MCF 10A (cell line): ENCODE measurements at regions of chr11 and their contacts with region 1.

Region 1: DNA sequence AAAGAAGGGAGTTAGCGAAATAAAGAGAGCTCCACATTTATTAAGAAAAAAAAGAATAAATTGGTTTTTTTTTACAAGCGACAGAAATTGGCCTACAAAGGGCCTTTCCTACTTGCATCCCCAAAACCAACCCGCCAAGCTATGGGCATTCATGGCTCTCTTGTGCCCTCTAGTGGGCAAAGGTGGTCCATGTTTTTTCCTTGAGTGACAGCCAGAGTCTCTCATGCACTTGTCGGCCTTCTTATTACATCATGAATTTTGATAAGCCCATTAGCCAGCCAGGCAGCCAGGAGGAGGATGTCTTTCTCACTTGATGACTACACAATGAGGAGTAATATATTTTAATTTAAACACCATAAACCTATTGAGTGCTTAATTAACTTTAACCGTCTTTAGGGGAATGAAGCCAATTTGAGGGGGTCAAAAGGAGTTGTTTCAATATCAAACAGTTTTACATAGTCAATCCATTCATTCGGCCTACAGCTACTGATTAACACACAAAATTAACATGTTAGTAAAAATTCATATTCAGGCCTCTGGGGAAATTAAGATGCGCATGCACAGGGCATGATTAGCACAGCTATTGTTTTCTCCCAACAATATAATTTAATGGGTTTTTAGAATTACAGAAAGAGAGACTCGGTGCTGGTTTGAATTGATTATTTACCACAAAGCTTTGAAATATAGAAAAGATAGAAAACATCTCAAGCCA is 85.5 kb downstream of the RCN1 start:
- DNase-seq: peak; percentile 89
- H3K4me3 Mint-ChIP-seq: no peak overlapping the region
- H3K27ac Mint-ChIP-seq: no peak overlapping the region
- H3K4me1 Mint-ChIP-seq: no peaks in the 10 kb centered on the region
- H3K27me3 Mint-ChIP-seq: peaks cover 21% of the 10 kb centered on the region
- CTCF ChIP-seq: peak; percentile 86

Region 2: DNA sequence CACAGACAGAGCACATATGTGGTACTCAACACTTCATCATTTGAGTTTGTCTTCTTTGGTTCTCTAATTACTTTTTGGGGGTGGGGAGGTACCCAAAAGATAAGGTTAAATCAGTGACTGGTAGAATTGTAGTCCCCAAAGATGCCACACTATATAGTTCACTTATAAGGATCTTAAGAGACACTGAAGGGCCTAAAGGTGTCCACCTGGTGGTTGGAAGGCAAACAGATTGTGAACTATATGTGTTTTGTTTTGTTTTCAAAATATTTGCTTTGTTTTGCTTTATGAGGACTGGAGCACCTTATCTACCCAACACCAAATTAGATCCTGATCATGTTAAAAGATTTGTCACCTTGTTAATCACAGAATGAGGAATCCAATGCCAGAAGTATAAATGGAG is 943.0 kb before region 1 on chr11:
- CTCF ChIA-PET with region 1: interaction called, 22 read pairs
- POLR2A ChIA-PET with region 1: no interaction called
- intact Hi-C with region 1: loop called (anchors 1 kb)
- DNase-seq: peak; percentile 19
- H3K4me3 Mint-ChIP-seq: no peak overlapping the region
- H3K27ac Mint-ChIP-seq: no peak overlapping the region
- H3K4me1 Mint-ChIP-seq: peaks cover 4% of the 10 kb centered on the region
- H3K27me3 Mint-ChIP-seq: no peaks in the 10 kb centered on the region
- CTCF ChIP-seq: peak; percentile 43

Region 3: GRCh38 chr11:31487848-31488247 is 688.5 kb before region 1 on chr11:
- CTCF ChIA-PET with region 1: interaction called, 13 read pairs
- POLR2A ChIA-PET with region 1: no interaction called
- intact Hi-C with region 1: loop called (anchors 10 kb)
- DNase-seq: peak; percentile 52
- H3K4me3 Mint-ChIP-seq: no peak overlapping the region
- H3K27ac Mint-ChIP-seq: no peak overlapping the region
- H3K4me1 Mint-ChIP-seq: peaks cover 11% of the 10 kb centered on the region
- H3K27me3 Mint-ChIP-seq: no peaks in the 10 kb centered on the region
- CTCF ChIP-seq: peak; percentile 43

Region 4: DNA sequence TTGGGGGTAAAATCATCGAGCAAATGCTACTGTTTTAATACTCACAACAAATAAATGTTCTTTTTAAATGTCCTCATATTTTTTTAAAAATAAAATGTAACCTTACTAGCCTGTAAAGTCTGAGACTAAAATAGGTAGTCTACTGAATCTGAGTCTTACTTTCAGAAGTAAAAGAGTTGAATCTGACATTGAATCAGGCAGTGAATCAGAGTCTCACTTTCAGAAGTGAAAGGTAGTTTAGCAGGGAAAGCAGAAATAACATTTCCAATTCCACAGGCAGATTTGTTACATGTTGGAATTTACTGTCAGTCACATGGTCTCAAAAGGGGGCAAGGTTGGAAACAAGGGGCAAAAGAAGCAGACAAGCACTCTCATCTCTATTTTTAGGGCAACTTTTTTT is 523.9 kb before region 1 on chr11:
- CTCF ChIA-PET with region 1: no interaction called
- POLR2A ChIA-PET with region 1: no interaction called
- intact Hi-C with region 1: no loop called
- DNase-seq: no peak
- H3K4me3 Mint-ChIP-seq: no peak overlapping the region
- H3K27ac Mint-ChIP-seq: no peak overlapping the region
- H3K4me1 Mint-ChIP-seq: peaks cover 15% of the 10 kb centered on the region
- H3K27me3 Mint-ChIP-seq: no peaks in the 10 kb centered on the region
- CTCF ChIP-seq: no peak

Region 5: GRCh38 chr11:32044158-32044863 is 132.1 kb before region 1 on chr11:
- CTCF ChIA-PET with region 1: interaction called, 241 read pairs
- POLR2A ChIA-PET with region 1: interaction called, 4 read pairs
- intact Hi-C with region 1: no loop called
- DNase-seq: no peak
- H3K4me3 Mint-ChIP-seq: no peak overlapping the region
- H3K27ac Mint-ChIP-seq: no peak overlapping the region
- H3K4me1 Mint-ChIP-seq: no peaks in the 10 kb centered on the region
- H3K27me3 Mint-ChIP-seq: peaks cover 60% of the 10 kb centered on the region
- CTCF ChIP-seq: no peak

Region 6: GRCh38 chr11:32071811-32072210 is 104.6 kb before region 1 on chr11:
- CTCF ChIA-PET with region 1: interaction called, 27 read pairs
- POLR2A ChIA-PET with region 1: no interaction called
- intact Hi-C with region 1: no loop called
- DNase-seq: peak; percentile 57
- H3K4me3 Mint-ChIP-seq: no peak overlapping the region
- H3K27ac Mint-ChIP-seq: no peak overlapping the region
- H3K4me1 Mint-ChIP-seq: no peaks in the 10 kb centered on the region
- H3K27me3 Mint-ChIP-seq: peaks cover 66% of the 10 kb centered on the region
- CTCF ChIP-seq: peak; percentile 35

Region 7: GRCh38 chr11:32231905-32232493 is 55.6 kb after region 1 on chr11:
- CTCF ChIA-PET with region 1: interaction called, 17 read pairs
- POLR2A ChIA-PET with region 1: no interaction called
- intact Hi-C with region 1: no loop called
- DNase-seq: peak; percentile 48
- H3K4me3 Mint-ChIP-seq: no peak overlapping the region
- H3K27ac Mint-ChIP-seq: no peak overlapping the region
- H3K4me1 Mint-ChIP-seq: no peaks in the 10 kb centered on the region
- H3K27me3 Mint-ChIP-seq: peaks cover 39% of the 10 kb centered on the region
- CTCF ChIP-seq: peak; percentile 69

Region 8: DNA sequence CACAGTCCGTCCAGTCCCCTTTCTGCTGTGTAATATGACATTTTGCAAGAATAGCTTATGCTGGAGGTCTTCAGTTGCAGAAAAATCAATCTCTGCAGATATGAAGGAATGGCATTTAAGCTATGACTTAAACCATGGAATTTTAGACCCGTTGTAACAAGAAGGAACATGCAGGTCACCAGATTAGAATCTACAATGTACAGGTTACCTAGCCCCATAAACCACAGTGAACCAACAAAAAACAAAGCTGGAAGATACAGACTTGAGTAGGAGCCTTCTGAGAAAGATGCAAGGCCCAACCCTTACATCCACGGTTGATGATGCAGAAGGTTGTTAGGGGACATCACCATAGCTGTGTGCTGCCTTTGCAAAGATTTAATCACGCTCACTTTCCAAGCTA is 126.4 kb after region 1 on chr11:
- CTCF ChIA-PET with region 1: interaction called, 98 read pairs
- POLR2A ChIA-PET with region 1: interaction called, 4 read pairs
- intact Hi-C with region 1: no loop called
- DNase-seq: no peak
- H3K4me3 Mint-ChIP-seq: no peak overlapping the region
- H3K27ac Mint-ChIP-seq: no peak overlapping the region
- H3K4me1 Mint-ChIP-seq: no peaks in the 10 kb centered on the region
- H3K27me3 Mint-ChIP-seq: no peaks in the 10 kb centered on the region
- CTCF ChIP-seq: no peak